ENCODE measurements at regions of chr4 and their contacts with region 1.

Region 1: DNA sequence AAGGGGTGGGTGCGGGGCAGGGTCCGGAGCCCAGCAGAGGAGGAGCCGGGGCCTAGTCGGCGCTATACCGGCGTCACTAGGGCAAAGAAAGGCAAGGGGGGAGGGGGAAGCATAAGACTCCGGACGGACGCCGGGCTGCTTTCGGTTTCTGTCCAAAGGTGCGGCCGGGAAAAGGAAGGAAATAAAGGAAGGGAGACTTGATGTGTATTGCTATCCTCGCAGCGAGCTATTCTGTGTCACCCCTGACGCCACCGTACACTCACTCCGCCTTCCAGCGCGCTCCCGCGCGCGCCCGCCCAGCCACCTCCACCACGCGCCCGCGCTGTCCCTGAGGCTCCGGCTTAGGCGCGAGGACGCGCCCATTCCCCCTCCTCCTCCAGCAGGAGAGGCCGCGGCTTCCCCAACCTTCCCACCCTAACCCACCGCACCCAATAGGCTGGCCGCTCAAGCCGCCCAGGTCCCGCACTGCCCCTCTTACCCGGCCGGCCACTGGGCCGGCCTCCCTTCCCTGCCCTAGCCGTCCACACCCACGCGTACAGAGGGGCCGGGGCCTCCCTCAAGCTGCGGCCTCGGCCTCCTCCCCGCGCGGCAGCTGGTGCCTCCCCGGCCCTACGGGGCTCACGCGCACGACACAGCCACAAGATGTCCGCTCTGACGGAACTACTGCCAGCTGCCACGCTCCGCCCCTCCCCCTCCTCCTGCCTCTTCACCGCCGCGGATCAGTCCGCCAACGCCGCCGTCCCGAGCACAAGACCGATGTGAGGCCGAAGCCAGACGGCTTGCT is at the start of gene UBE2D3:
- DNase-seq: peak; percentile 98
- H3K4me3 Mint-ChIP-seq: no peak within 1 kb of the TSS
- H3K27ac Mint-ChIP-seq: no peak within 1 kb of the TSS
- H3K4me1 Mint-ChIP-seq: peaks cover 31% of the 10 kb centered on the region
- H3K27me3 Mint-ChIP-seq: no peaks in the 10 kb centered on the region
- total RNA-seq, gene UBE2D3: 488 TPM in 2 replicates

Region 2: DNA sequence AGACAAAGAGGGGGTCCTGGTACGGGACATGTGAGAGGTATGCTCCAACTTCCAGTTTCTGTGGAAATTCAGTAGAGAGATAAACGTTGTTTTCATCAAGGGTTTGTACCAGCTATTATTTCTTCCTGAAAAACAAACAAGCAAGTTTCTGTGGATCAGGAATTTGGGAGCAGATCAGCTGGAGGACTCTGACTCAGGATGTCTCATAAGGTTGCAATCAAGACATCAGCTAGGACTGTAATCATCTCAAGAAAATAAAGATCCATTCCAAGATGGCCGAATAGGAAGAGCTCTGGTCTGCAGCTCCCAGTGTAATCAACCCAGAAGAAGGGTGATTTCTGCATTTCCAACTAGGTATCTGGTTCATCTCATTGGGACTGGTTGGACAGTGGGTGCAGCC is 349.4 kb before region 1 on chr4:
- intact Hi-C with region 1: no loop called
- DNase-seq: no peak
- H3K4me3 Mint-ChIP-seq: no peak overlapping the region
- H3K27ac Mint-ChIP-seq: no peak overlapping the region
- H3K4me1 Mint-ChIP-seq: no peaks in the 10 kb centered on the region
- H3K27me3 Mint-ChIP-seq: no peaks in the 10 kb centered on the region

Region 3: DNA sequence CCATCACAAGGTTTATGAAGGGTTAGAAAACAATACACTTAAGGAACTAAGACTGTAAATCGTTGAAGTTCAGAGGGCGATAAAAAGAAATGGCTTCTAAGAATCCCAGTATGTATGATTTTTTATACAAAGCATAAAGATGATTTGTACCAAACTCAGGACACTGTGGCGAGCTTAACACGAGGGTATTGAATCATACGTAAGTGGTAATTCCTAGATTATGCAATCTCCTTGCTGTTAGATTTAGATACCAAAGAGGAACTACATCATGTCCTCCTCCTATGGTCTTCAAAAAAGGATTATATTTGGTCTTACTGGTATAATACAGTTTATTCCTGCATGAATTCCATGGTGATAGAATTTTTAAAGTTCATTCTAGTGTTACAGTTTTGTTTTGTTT is 302.0 kb before region 1 on chr4:
- intact Hi-C with region 1: loop called (anchors 5 kb)
- DNase-seq: no peak
- H3K4me3 Mint-ChIP-seq: peak overlapping the region; percentile 44
- H3K27ac Mint-ChIP-seq: peak overlapping the region; percentile 42
- H3K4me1 Mint-ChIP-seq: peaks cover 78% of the 10 kb centered on the region
- H3K27me3 Mint-ChIP-seq: no peaks in the 10 kb centered on the region

Region 4: GRCh38 chr4:102809190-102809589 is 17.9 kb before region 1 on chr4:
- intact Hi-C with region 1: loop called (anchors 2 kb)
- DNase-seq: no peak
- H3K4me3 Mint-ChIP-seq: no peak overlapping the region
- H3K27ac Mint-ChIP-seq: peak overlapping the region; percentile 71
- H3K4me1 Mint-ChIP-seq: peaks cover 49% of the 10 kb centered on the region
- H3K27me3 Mint-ChIP-seq: no peaks in the 10 kb centered on the region

Region 5: GRCh38 chr4:103019308-103020124 is 192.4 kb after region 1 on chr4 and contains the start of gene SLC9B1:
- intact Hi-C with region 1: loop called (anchors 1 kb)
- DNase-seq: peak; percentile 98
- H3K4me3 Mint-ChIP-seq: peak within 1 kb of the TSS; percentile 93
- H3K27ac Mint-ChIP-seq: peak within 1 kb of the TSS; percentile 94
- H3K4me1 Mint-ChIP-seq: peaks cover 22% of the 10 kb centered on the region
- H3K27me3 Mint-ChIP-seq: no peaks in the 10 kb centered on the region
- total RNA-seq, gene SLC9B1: 0.23 and 0.47 TPM in 2 replicates

Region 6: DNA sequence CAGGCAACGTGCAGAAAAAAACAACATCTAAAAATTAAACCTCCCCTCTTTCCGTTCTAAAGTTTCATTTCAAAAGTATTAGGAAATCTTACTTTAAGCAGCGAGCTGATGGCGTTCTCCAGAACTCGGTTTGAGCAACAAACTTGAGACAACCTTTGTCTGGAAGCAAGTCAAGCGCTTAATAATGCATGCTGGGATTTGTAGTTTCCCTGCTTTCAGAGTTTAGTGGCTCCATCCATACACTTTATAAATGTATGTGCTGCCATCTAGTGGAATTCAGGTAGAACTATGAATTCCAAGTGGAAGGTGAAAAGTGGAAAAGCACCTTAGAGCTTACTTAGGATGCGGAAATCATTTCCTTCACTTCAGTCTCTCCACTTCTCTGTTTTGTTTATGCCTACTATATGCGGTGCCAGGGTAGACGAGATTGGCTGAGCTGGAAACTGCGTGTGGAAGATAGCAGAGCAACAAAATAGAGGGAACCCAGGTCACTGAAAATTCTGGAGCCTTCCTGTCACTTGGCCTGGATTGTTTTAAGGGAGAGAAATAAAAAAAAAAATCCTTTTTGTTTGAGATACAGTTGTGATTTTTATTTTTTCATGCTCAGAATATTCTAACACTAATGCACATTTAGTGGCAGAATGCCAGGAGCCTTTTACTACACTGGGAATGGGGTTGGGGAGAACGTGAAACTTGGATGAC is 272.8 kb after region 1 on chr4 and contains the start of gene BDH2:
- intact Hi-C with region 1: loop called (anchors 1 kb)
- DNase-seq: peak; percentile 87
- H3K4me3 Mint-ChIP-seq: peak within 1 kb of the TSS; percentile 84
- H3K27ac Mint-ChIP-seq: peak within 1 kb of the TSS; percentile 83
- H3K4me1 Mint-ChIP-seq: peaks cover 8% of the 10 kb centered on the region
- H3K27me3 Mint-ChIP-seq: no peaks in the 10 kb centered on the region
- total RNA-seq, gene BDH2: 11.0 and 13.2 TPM in 2 replicates

Measured in activated CD4-positive, alpha-beta T cell treated with anti-CD3 and anti-CD28 coated beads, Interleukin-2, amount 10 ng/mL, durations not matched to agents 24 days and 14 days (primary cell).